Activated CD4-positive, alpha-beta T cell treated with anti-CD3 and anti-CD28 coated beads, Interleukin-2, amount 10 ng/mL, durations not matched to agents 7 days and 5 days (primary cell): ENCODE measurements at regions of chr12 and their contacts with region 1.

Region 1: DNA sequence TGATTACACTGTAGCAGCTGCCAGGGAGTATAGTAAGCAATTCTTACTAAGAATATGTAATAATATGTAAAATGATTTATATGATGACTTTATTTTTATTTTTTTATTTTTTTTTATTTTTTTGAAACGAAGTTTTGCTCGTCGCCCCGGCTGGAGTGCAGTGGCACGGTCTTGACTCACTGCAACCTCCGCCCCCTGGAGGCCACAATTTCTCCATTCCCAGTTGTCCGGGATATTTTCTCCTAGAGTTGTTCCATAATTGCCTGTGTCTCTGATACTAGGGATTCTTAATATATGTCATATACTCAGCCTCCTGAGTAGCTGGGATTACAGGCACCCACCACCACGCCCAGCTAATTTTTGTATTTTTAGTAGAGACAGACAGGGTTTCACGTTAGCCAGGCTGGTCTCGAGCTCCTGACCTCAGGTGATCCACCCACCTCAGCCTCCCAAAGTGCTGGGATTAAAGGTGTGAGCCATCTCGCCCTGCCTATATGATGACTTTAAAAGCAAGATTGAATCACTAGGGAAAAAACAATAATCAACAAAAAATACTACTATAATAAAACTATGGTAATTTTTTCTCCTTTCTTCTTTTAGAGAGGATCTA is 12.2 kb upstream of the ITPR2 start:
- DNase-seq: no peak
- H3K4me3 Mint-ChIP-seq: no peak overlapping the region
- H3K27ac Mint-ChIP-seq: no peak overlapping the region
- H3K4me1 Mint-ChIP-seq: peaks cover 21% of the 10 kb centered on the region
- H3K27me3 Mint-ChIP-seq: peaks cover 16% of the 10 kb centered on the region

Region 2: DNA sequence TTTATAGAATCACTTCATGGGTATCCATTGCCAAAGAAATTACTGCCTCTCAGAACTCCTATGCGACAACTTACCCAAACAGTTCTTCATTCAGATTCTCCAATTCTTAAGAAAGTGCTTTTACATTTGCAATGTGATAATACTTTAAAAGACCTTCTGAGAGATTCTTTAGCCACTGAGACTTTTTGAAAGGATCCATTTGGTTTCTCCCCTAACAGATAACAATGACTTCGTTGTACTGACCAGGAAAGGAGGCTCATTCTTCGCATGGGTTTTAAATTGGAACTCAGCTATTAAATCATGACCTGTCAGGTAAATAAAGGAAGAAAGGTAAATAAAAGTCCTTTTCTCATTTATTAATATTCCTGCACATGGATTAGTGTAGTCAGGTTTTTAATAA is 27.0 kb before region 1 on chr12:
- CTCF ChIA-PET with region 1: no interaction called
- POLR2A ChIA-PET with region 1: interaction called, 14 read pairs
- DNase-seq: no peak
- H3K4me3 Mint-ChIP-seq: no peak overlapping the region
- H3K27ac Mint-ChIP-seq: no peak overlapping the region
- H3K4me1 Mint-ChIP-seq: peaks cover 3% of the 10 kb centered on the region
- H3K27me3 Mint-ChIP-seq: no peaks in the 10 kb centered on the region

Region 3: DNA sequence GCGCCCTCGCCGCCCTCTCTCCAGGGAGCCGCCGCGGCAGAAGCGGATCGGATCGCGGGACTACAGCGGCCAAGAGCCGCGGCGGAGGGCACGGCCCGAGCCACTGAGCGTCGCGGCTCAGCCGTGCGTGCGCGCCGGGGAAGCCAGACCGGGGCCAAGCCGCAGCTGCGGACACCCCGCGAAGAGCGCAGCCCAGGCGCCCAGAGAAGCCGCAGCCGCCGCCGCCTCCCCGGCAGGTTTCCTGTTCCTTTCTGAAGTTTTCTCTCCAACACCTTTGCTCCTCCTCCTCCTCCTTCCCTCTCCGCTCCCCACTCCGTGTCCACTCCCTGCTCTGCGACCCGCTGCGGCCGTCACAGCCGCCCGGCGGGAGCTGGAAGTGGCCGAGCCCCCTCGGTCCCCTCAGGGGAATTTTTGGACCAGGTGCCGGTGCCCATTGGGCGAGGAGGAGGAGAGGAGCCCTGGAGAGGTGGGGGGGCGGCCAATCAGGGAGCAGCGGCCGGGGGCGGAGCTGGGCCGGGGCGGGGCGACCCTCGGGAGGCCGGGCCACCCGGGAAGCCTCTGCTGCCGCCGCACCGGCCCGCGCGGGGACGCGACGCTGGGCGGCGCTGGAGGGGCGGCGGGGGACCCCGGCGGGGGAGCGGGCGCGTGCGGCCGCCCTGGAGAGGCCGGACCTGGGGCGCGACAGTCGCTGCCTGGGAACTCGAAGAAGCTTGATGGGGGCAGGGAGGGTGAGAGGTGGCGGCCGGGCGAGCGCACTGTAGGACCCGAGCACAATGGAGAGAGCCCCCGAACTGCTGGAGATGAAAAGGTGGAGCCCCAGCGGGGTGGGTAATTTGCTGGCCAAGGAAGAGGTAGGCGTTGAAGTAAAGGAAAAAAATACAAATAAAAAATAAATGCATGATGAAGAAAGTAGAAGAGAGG is 12.1 kb before region 1 on chr12 and contains the start of gene ITPR2:
- CTCF ChIA-PET with region 1: interaction called, 11 read pairs
- POLR2A ChIA-PET with region 1: interaction called, 3 read pairs
- DNase-seq: peak; percentile 93
- H3K4me3 Mint-ChIP-seq: peak within 1 kb of the TSS; percentile 92
- H3K27ac Mint-ChIP-seq: peak within 1 kb of the TSS; percentile 96
- H3K4me1 Mint-ChIP-seq: peaks cover 42% of the 10 kb centered on the region
- H3K27me3 Mint-ChIP-seq: no peaks in the 10 kb centered on the region
- total RNA-seq, gene ITPR2: 40.3 to 40.5 TPM